B cell (primary cell): ENCODE measurements at regions of chr7 and their contacts with region 1.

Region 1: GRCh38 chr7:101410743-101411507 is 48.2 kb downstream of the COL26A1 start:
- DNase-seq: peak; percentile 67
- ATAC-seq: peak; percentile 78
- H3K4me3 ChIP-seq: peak overlapping the region in 1 of 5 experiments; percentile 13
- H3K4me3 Mint-ChIP-seq: peak overlapping the region; percentile 53
- H3K27ac ChIP-seq: no peak overlapping the region
- H3K27ac Mint-ChIP-seq: no peak overlapping the region
- H3K4me1 ChIP-seq: peaks cover 8 to 10% of the 10 kb centered on the region in 2 donors
- H3K4me1 Mint-ChIP-seq: peaks cover 15% of the 10 kb centered on the region
- H3K27me3 ChIP-seq: peaks cover 0 to 11% (median 3%) of the 10 kb centered on the region in 4 experiments
- H3K27me3 Mint-ChIP-seq: peaks cover 37% of the 10 kb centered on the region
- CTCF ChIP-seq: peak; percentile 93

Region 2: DNA sequence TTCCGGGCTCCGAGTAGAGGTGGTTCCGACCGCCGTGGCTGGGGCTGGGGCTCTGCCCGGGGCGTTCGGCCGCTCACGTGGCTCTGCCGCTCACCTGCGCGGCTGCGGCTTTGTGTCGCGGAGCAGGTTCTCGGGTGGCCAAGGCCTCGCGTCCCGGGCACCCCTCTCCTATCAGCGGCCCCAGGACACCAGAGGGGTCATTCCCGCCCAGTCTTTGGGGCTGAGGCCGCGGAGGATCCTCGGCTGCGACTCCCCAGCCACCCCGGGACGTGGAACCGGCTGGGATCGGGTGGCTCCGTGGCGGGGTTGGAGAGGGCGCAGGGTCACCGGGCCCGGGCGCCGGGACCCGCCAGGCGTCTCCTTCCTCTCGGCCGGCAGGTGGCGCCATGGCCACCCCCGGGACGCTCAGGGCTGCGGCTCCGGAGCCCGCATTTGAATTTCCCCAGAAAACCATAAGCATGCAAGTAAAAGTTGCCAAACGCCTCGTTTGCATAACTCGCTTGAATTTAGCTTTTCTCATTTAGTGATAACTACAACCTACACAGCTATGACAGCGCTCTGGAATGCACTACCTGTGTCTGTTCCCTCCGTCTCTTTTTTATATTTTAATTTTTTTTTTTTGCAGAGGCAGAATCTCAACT is 47.1 kb before region 1 on chr7:
- CTCF ChIA-PET with region 1: interaction called, 83 read pairs
- POLR2A ChIA-PET with region 1: no interaction called
- intact Hi-C with region 1: loop called (anchors 1 kb)
- DNase-seq: peak; percentile 84
- ATAC-seq: peak; percentile 94
- H3K4me3 ChIP-seq: peak overlapping the region in 4 of 5 experiments; percentile 42 to 74 (median 50)
- H3K4me3 Mint-ChIP-seq: peak overlapping the region; percentile 68
- H3K27ac ChIP-seq: no peak overlapping the region
- H3K27ac Mint-ChIP-seq: no peak overlapping the region
- H3K4me1 ChIP-seq: peaks cover 10 to 21% of the 10 kb centered on the region in 2 donors
- H3K4me1 Mint-ChIP-seq: peaks cover 12% of the 10 kb centered on the region
- H3K27me3 ChIP-seq: peaks cover 0 to 29% (median 11%) of the 10 kb centered on the region in 4 experiments
- H3K27me3 Mint-ChIP-seq: peaks cover 32% of the 10 kb centered on the region
- CTCF ChIP-seq: peak; percentile 95

Region 3: GRCh38 chr7:101370836-101371235 is 40.1 kb before region 1 on chr7:
- CTCF ChIA-PET with region 1: interaction called, 14 read pairs
- POLR2A ChIA-PET with region 1: no interaction called
- intact Hi-C with region 1: no loop called
- DNase-seq: no peak
- ATAC-seq: no peak
- H3K4me3 ChIP-seq: no peak overlapping the region
- H3K4me3 Mint-ChIP-seq: no peak overlapping the region
- H3K27ac ChIP-seq: no peak overlapping the region
- H3K27ac Mint-ChIP-seq: no peak overlapping the region
- H3K4me1 ChIP-seq: peaks cover 0 to 9% of the 10 kb centered on the region in 2 donors
- H3K4me1 Mint-ChIP-seq: peaks cover 11% of the 10 kb centered on the region
- H3K27me3 ChIP-seq: peaks cover 0 to 18% (median 3%) of the 10 kb centered on the region in 4 experiments
- H3K27me3 Mint-ChIP-seq: peaks cover 41% of the 10 kb centered on the region
- CTCF ChIP-seq: no peak

Region 4: GRCh38 chr7:101390901-101391301 is 20.0 kb before region 1 on chr7:
- CTCF ChIA-PET with region 1: interaction called, 38 read pairs
- POLR2A ChIA-PET with region 1: no interaction called
- intact Hi-C with region 1: no loop called
- DNase-seq: peak; percentile 67
- ATAC-seq: peak; percentile 98
- H3K4me3 ChIP-seq: peak overlapping the region in 3 of 5 experiments; percentile 6 to 35 (median 10)
- H3K4me3 Mint-ChIP-seq: peak overlapping the region; percentile 80
- H3K27ac ChIP-seq: peak overlapping the region; percentile 55 to 57
- H3K27ac Mint-ChIP-seq: peak overlapping the region; percentile 86
- H3K4me1 ChIP-seq: peaks cover 42 to 45% of the 10 kb centered on the region in 2 donors
- H3K4me1 Mint-ChIP-seq: peaks cover 39% of the 10 kb centered on the region
- H3K27me3 ChIP-seq: peaks cover 0 to 10% (median 1%) of the 10 kb centered on the region in 4 experiments
- H3K27me3 Mint-ChIP-seq: peaks cover 4% of the 10 kb centered on the region
- CTCF ChIP-seq: no peak

Region 5: GRCh38 chr7:101397770-101398324 is 13.1 kb before region 1 on chr7:
- CTCF ChIA-PET with region 1: interaction called, 38 read pairs
- POLR2A ChIA-PET with region 1: no interaction called
- intact Hi-C with region 1: no loop called
- DNase-seq: no peak
- ATAC-seq: no peak
- H3K4me3 ChIP-seq: no peak overlapping the region
- H3K4me3 Mint-ChIP-seq: no peak overlapping the region
- H3K27ac ChIP-seq: no peak overlapping the region
- H3K27ac Mint-ChIP-seq: no peak overlapping the region
- H3K4me1 ChIP-seq: peaks cover 0 to 3% of the 10 kb centered on the region in 2 donors
- H3K4me1 Mint-ChIP-seq: peaks cover 5% of the 10 kb centered on the region
- H3K27me3 ChIP-seq: peaks cover 0 to 22% (median 10%) of the 10 kb centered on the region in 4 experiments
- H3K27me3 Mint-ChIP-seq: peaks cover 33% of the 10 kb centered on the region
- CTCF ChIP-seq: no peak

Region 6: DNA sequence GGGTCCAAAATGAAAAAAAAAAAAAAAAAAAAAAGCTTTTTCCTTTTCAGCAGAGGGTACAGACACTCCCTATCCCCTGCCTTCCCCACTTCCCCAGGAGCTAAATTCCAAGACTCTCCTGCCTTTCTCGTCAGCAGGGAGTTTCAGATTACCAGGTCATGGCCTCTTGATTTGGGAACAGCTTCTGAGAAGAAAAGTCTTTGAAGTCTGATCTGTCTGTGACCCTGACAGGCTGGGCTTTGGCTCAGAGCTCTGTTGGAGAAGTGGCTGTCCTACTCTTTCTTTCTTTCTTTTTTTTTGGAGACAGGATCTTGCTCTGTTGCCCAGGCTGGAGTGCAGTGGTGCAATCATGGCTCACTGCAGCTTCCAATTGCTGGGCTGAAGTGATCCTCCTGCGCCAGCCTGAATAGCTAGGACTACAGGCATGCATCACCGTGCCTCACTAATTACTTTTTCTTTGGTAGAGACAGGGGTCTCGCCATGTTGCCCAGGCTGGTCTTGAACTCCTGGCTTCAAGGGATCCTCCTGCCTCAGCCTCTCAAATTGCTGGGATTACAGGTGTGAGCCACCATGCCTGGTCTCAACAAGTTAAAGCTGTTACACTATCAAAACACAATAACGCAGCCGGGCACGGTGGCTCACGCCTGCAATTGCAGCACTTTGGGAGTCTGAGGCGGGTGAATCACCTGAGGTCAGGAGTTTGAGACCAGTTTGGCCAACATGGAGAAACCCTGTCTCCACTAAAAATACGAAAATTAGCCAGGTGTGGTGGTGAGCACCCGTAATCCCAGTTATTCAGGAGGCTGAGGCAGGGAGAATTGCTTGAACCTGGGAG is 11.7 kb after region 1 on chr7:
- CTCF ChIA-PET with region 1: interaction called, 14 read pairs
- POLR2A ChIA-PET with region 1: no interaction called
- intact Hi-C with region 1: no loop called
- DNase-seq: no peak
- ATAC-seq: no peak
- H3K4me3 ChIP-seq: no peak overlapping the region
- H3K4me3 Mint-ChIP-seq: no peak overlapping the region
- H3K27ac ChIP-seq: no peak overlapping the region
- H3K27ac Mint-ChIP-seq: no peak overlapping the region
- H3K4me1 ChIP-seq: no peaks in the 10 kb centered on the region
- H3K4me1 Mint-ChIP-seq: no peaks in the 10 kb centered on the region
- H3K27me3 ChIP-seq: peaks cover 0 to 22% (median 0%) of the 10 kb centered on the region in 4 experiments
- H3K27me3 Mint-ChIP-seq: peaks cover 14% of the 10 kb centered on the region
- CTCF ChIP-seq: no peak

Region 7: GRCh38 chr7:101436857-101437576 is 26.1 kb after region 1 on chr7:
- CTCF ChIA-PET with region 1: interaction called, 20 read pairs
- POLR2A ChIA-PET with region 1: interaction called, 4 read pairs
- intact Hi-C with region 1: no loop called
- DNase-seq: no peak
- ATAC-seq: no peak
- H3K4me3 ChIP-seq: no peak overlapping the region
- H3K4me3 Mint-ChIP-seq: no peak overlapping the region
- H3K27ac ChIP-seq: no peak overlapping the region
- H3K27ac Mint-ChIP-seq: no peak overlapping the region
- H3K4me1 ChIP-seq: no peaks in the 10 kb centered on the region
- H3K4me1 Mint-ChIP-seq: no peaks in the 10 kb centered on the region
- H3K27me3 ChIP-seq: peaks cover 0 to 45% (median 2%) of the 10 kb centered on the region in 4 experiments
- H3K27me3 Mint-ChIP-seq: peaks cover 34% of the 10 kb centered on the region
- CTCF ChIP-seq: no peak